Activated naive CD4-positive, alpha-beta T cell treated with anti-CD3 and anti-CD28 coated beads, Interleukin-2, amount 10 ng/mL, durations not matched to agents 7 days and 5 days (primary cell): ENCODE measurements at regions of chr7 and their contacts with region 1.

Region 1: GRCh38 chr7:101138213-101138870 is 11.4 kb downstream of the SERPINE1 start:
- DNase-seq: peak; percentile 84
- H3K4me3 Mint-ChIP-seq: no peak overlapping the region
- H3K27ac Mint-ChIP-seq: peak overlapping the region; percentile 4
- H3K4me1 Mint-ChIP-seq: peaks cover 39% of the 10 kb centered on the region
- H3K27me3 Mint-ChIP-seq: peaks cover 67% of the 10 kb centered on the region

Region 2: GRCh38 chr7:101153969-101154692 is 15.8 kb after region 1 on chr7 and contains the start of gene AP1S1:
- CTCF ChIA-PET with region 1: interaction called, 23 read pairs
- DNase-seq: peak; percentile 96
- H3K4me3 Mint-ChIP-seq: peak within 1 kb of the TSS; percentile 84
- H3K27ac Mint-ChIP-seq: peak within 1 kb of the TSS; percentile 2
- H3K4me1 Mint-ChIP-seq: peaks cover 16% of the 10 kb centered on the region
- H3K27me3 Mint-ChIP-seq: peaks cover 41% of the 10 kb centered on the region

Region 3: DNA sequence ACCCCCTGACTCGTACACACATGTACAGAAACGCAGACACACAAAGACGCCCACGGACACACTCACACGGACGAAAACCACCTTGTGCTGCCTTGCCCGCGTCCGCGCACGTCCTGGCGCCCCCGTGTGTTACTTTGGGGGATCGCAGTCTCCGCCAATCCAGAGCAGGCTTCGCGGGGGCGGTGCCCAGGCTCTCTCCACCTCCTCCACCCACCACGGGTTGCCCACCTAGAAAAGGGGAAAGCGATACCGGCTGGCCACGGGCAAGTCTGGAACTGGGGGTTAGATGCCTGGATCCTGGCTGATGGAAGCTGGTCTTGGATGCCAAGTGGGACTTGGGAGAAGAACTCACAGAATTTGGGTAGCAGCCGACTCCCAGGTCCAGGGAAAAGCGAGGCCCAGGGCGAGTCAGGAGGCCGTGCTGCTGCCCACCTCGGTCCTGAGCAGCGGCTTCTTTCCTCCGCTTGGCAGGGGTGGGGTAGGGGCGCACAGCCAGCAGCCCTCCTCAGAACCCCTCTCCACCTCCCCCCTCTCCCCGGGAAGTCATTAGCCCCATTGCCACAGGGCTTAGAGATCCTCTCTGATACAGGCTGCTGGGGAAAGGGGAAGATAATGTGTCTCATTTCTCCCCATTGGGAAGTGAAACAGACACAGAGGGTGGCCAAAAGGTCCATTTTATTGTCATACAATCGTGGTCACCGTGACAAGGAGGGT is 31.7 kb after region 1 on chr7:
- CTCF ChIA-PET with region 1: interaction called, 35 read pairs
- DNase-seq: peak; percentile 87
- H3K4me3 Mint-ChIP-seq: no peak overlapping the region
- H3K27ac Mint-ChIP-seq: no peak overlapping the region
- H3K4me1 Mint-ChIP-seq: peaks cover 73% of the 10 kb centered on the region
- H3K27me3 Mint-ChIP-seq: peaks cover 100% of the 10 kb centered on the region

Region 4: DNA sequence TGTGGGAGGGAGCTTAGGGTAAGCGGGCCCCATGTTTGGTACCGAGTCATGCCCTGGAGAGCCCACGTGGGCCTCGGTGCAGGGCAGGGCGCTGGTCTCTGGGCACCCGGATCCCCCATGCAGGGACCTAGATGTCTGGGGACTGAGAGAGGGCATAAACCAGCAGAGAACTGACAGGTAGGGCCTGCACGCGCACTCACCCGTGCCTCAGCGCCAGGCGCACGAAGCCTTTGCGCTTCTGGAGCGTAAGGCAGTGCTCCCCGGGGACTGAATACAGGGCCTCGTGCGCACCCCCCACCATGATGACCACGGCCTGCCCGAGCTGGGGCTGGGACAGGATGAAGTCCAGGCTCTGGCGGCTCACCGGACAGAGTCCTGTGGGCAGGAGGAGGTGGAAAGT is 59.6 kb after region 1 on chr7:
- CTCF ChIA-PET with region 1: interaction called, 150 read pairs
- DNase-seq: no peak
- H3K4me3 Mint-ChIP-seq: no peak overlapping the region
- H3K27ac Mint-ChIP-seq: no peak overlapping the region
- H3K4me1 Mint-ChIP-seq: peaks cover 16% of the 10 kb centered on the region
- H3K27me3 Mint-ChIP-seq: peaks cover 70% of the 10 kb centered on the region

Region 5: GRCh38 chr7:101235050-101235449 is 96.7 kb after region 1 on chr7:
- CTCF ChIA-PET with region 1: no interaction called
- DNase-seq: no peak
- H3K4me3 Mint-ChIP-seq: no peak overlapping the region
- H3K27ac Mint-ChIP-seq: no peak overlapping the region
- H3K4me1 Mint-ChIP-seq: peaks cover 4% of the 10 kb centered on the region
- H3K27me3 Mint-ChIP-seq: no peaks in the 10 kb centered on the region

Region 6: GRCh38 chr7:101299511-101300464 is 161.4 kb after region 1 on chr7:
- CTCF ChIA-PET with region 1: no interaction called
- DNase-seq: no peak
- H3K4me3 Mint-ChIP-seq: no peak overlapping the region
- H3K27ac Mint-ChIP-seq: no peak overlapping the region
- H3K4me1 Mint-ChIP-seq: peaks cover 7% of the 10 kb centered on the region
- H3K27me3 Mint-ChIP-seq: peaks cover 83% of the 10 kb centered on the region